A673 (cell line): ENCODE measurements at regions of chr3 and their contacts with region 1.

Region 1: DNA sequence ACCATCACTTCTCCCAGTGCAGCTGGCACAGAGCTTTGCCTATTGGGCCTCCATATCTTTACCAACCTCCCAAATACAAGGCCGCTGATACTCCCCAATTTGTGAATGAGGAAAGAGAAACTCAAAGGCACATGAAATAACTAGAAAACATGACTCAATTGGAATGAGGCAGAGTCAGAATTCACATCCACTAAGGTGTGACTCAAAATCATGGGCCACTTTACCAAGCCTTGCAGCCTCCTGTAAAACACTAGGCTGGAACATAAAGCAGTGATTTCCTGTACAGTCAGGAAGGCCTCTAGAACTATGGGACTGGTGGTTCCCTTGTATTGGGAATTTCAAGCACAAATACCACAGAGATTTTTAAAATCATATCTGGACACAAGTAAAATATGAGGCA is 128.6 kb downstream of the DCLK3 start:
- DNase-seq: no peak
- H3K4me3 ChIP-seq: no peak overlapping the region
- H3K27ac ChIP-seq: no peak overlapping the region
- H3K4me1 ChIP-seq: no peaks in the 10 kb centered on the region
- H3K27me3 ChIP-seq: no peaks in the 10 kb centered on the region
- CTCF ChIP-seq: no peak

Region 2: DNA sequence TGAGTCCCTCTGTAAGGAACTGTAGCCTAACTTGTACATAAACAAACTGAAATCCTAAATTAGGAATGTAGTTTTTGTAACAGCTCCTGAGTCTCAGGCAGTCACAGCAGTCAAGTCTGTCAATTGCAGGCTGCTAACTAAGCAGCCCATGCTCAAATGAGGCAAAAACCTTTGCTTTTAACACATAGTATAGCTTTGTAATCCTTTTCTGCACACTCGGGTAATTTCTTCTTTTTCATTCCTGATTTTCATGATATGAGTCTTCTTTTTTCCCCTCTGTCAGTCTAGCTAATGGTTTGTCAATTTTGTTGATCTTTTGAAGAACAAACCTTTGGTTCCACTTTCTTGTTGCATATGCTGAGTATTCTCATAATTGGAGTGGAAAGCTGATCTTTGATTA is 623.6 kb after region 1 on chr3:
- CTCF ChIA-PET with region 1: no interaction called
- POLR2A ChIA-PET with region 1: interaction called, 10 read pairs
- intact Hi-C with region 1: no loop called
- DNase-seq: no peak
- H3K4me3 ChIP-seq: no peak overlapping the region
- H3K27ac ChIP-seq: no peak overlapping the region
- H3K4me1 ChIP-seq: peaks cover 17% of the 10 kb centered on the region
- H3K27me3 ChIP-seq: no peaks in the 10 kb centered on the region
- CTCF ChIP-seq: no peak